CD8-positive, alpha-beta T cell (primary cell): ENCODE measurements at regions of chr18 and their contacts with region 1.

Region 1: DNA sequence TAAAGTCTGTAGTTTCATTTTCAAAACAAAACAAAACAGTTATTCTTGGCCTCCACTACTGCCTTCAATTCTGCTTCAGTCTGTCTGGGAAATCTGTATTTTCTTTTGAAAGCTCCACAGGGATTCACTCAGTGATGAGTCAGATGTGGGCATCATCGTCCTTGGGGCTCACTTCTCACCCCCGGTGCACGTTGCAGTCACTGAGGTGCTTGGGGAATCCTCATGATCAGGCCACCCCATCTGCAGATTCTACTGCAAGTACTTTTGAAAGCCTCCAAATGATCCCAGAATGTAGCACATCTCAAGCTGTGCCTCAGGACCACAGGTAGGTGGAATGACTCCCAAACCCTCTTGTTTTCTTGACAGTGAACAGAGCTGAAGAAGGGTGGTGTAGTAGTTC is 34.3 kb downstream of the LPIN2 start:
- DNase-seq: peak in 3 of 9 experiments; percentile 47 to 68 (median 55)
- ATAC-seq: peak; percentile 21
- H3K4me3 ChIP-seq: peak overlapping the region; percentile 19 to 22
- H3K4me3 Mint-ChIP-seq: peak overlapping the region; percentile 81
- H3K27ac ChIP-seq: peak overlapping the region; percentile 25 to 87
- H3K27ac Mint-ChIP-seq: peak overlapping the region; percentile 92
- H3K4me1 ChIP-seq: peaks cover 61% of the 10 kb centered on the region
- H3K4me1 Mint-ChIP-seq: peaks cover 77% of the 10 kb centered on the region
- H3K27me3 ChIP-seq: no peaks in the 10 kb centered on the region
- H3K27me3 Mint-ChIP-seq: no peaks in the 10 kb centered on the region
- CTCF ChIP-seq: no peak

Region 2: DNA sequence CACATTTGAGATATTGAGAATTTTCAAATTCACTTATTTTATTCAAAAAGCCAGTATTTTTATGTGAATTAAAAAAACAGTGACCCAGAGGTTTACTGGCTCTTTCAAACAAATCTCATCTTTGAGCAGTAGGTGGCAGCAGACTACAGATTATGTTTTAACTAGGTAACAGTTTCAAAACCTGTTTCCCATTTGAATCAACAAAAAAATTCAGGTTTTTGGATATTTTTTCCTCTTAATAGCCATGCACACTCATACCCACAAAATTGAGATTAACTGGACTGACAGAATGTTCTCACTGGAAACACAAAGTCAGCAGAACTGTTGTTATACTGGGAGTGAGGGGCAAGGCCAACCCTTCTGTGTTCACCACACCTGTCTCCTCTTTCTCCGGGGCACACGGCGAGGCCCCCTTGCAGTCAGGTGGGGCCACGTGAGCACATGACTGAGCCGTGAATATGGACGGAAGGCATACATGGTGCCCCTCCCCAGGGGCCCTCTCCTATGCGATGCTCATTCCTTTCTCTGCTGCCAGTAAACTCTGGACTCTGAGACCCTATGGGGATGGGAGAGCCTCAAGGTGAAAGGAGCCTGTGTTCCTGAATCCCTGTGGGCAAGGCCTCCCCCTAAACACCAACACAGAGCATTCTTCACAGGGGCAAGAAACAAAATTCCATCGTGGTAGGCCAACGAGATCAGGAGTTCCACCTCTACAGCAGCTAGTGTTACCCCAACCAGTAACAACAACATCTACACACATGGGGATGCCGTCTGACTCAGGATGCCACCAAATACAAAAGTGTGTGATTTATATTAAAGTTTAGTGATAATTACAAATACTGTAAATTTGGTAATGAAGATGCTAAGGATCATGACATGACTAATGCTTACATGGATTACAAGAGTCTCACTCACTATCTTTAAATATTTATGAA is 46.1 kb before region 1 on chr18:
- CTCF ChIA-PET with region 1: interaction called, 205 read pairs
- POLR2A ChIA-PET with region 1: interaction called, 4 read pairs
- intact Hi-C with region 1: no loop called
- DNase-seq: peak in 6 of 9 experiments; percentile 37 to 82 (median 52)
- ATAC-seq: peak; percentile 79
- H3K4me3 ChIP-seq: no peak overlapping the region
- H3K4me3 Mint-ChIP-seq: no peak overlapping the region
- H3K27ac ChIP-seq: peak overlapping the region in 1 of 2 experiments; percentile 51
- H3K27ac Mint-ChIP-seq: peak overlapping the region; percentile 89
- H3K4me1 ChIP-seq: peaks cover 6% of the 10 kb centered on the region
- H3K4me1 Mint-ChIP-seq: peaks cover 23% of the 10 kb centered on the region
- H3K27me3 ChIP-seq: no peaks in the 10 kb centered on the region
- H3K27me3 Mint-ChIP-seq: no peaks in the 10 kb centered on the region
- CTCF ChIP-seq: peak; percentile 96

Region 3: GRCh38 chr18:2964361-2965010 is 14.2 kb before region 1 on chr18:
- CTCF ChIA-PET with region 1: interaction called, 127 read pairs
- POLR2A ChIA-PET with region 1: interaction called, 86 read pairs
- intact Hi-C with region 1: loop called (anchors 1 kb)
- DNase-seq: peak in 2 of 9 experiments; percentile 39 to 54
- ATAC-seq: no peak
- H3K4me3 ChIP-seq: peak overlapping the region; percentile 3 to 12
- H3K4me3 Mint-ChIP-seq: peak overlapping the region; percentile 47
- H3K27ac ChIP-seq: peak overlapping the region in 1 of 2 experiments; percentile 90
- H3K27ac Mint-ChIP-seq: peak overlapping the region; percentile 97
- H3K4me1 ChIP-seq: peaks cover 93% of the 10 kb centered on the region
- H3K4me1 Mint-ChIP-seq: peaks cover 89% of the 10 kb centered on the region
- H3K27me3 ChIP-seq: no peaks in the 10 kb centered on the region
- H3K27me3 Mint-ChIP-seq: no peaks in the 10 kb centered on the region
- CTCF ChIP-seq: no peak

Region 4: DNA sequence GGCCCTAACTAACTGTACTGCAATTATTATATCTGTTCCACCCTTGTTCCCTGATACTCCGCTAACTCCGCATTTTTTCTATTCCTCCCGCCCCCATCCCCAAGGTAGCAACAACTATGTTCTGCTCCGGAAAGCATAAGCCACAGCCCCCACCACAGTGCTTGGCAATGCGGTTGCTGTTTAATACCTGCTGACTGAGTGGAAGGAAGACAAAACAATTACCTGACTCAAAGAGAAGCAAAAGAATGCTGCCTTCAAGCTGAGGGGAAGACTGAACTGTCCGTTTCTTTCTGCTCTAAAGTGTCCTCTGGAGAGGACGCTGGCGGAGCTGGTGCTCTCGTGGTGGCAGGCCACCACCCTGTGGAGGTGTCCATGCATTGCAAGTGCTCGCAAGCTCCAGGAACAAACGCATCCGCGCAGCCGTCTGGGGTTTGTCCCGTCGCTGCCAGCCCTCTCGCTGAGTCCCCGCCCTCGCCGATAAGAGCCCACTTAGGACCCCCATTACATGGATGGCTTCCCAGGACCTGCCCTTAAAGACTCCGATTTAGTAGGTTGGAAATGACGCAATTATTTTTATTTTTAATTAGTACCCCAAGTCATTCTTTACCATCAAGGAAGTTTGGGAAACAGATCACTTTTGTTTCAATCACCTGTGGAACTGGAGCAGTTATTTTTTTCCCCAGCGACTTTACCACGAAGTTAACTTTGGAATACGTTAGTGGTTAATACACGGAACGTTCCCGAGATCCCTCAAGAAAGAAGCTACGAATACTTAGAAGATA is 267.4 kb after region 1 on chr18:
- CTCF ChIA-PET with region 1: interaction called, 10 read pairs
- POLR2A ChIA-PET with region 1: interaction called, 3 read pairs
- intact Hi-C with region 1: no loop called
- DNase-seq: peak; percentile 44 to 89 (median 78)
- ATAC-seq: peak; percentile 60
- H3K4me3 ChIP-seq: peak overlapping the region; percentile 77 to 90
- H3K4me3 Mint-ChIP-seq: peak overlapping the region; percentile 92
- H3K27ac ChIP-seq: peak overlapping the region; percentile 79 to 89
- H3K27ac Mint-ChIP-seq: peak overlapping the region; percentile 90
- H3K4me1 ChIP-seq: peaks cover 11% of the 10 kb centered on the region
- H3K4me1 Mint-ChIP-seq: peaks cover 39% of the 10 kb centered on the region
- H3K27me3 ChIP-seq: no peaks in the 10 kb centered on the region
- H3K27me3 Mint-ChIP-seq: no peaks in the 10 kb centered on the region
- CTCF ChIP-seq: peak; percentile 84

Region 5: GRCh38 chr18:3340682-3341097 is 362.0 kb after region 1 on chr18:
- CTCF ChIA-PET with region 1: no interaction called
- POLR2A ChIA-PET with region 1: no interaction called
- intact Hi-C with region 1: no loop called
- DNase-seq: no peak
- ATAC-seq: no peak
- H3K4me3 ChIP-seq: no peak overlapping the region
- H3K4me3 Mint-ChIP-seq: no peak overlapping the region
- H3K27ac ChIP-seq: no peak overlapping the region
- H3K27ac Mint-ChIP-seq: no peak overlapping the region
- H3K4me1 ChIP-seq: no peaks in the 10 kb centered on the region
- H3K4me1 Mint-ChIP-seq: no peaks in the 10 kb centered on the region
- H3K27me3 ChIP-seq: no peaks in the 10 kb centered on the region
- H3K27me3 Mint-ChIP-seq: no peaks in the 10 kb centered on the region
- CTCF ChIP-seq: no peak